ENCODE measurements at regions of chr3 and their contacts with region 1.

Region 1: GRCh38 chr3:63993653-63994079 is 29.6 kb downstream of the PSMD6 start:
- DNase-seq: peak in 5 of 6 donors; percentile 66 to 79 (median 69)
- ATAC-seq: peak; percentile 83 to 94 (median 92)
- H3K4me3 ChIP-seq: no peak overlapping the region
- H3K27ac ChIP-seq: peak overlapping the region in 1 of 4 donors; percentile 38
- H3K4me1 ChIP-seq: peaks cover 8 to 18% (median 17%) of the 10 kb centered on the region in 3 donors
- H3K27me3 ChIP-seq: no peaks in the 10 kb centered on the region
- CTCF ChIP-seq: peak; percentile 76 to 94 (median 85)

Region 2: GRCh38 chr3:63387568-63387967 is 606.1 kb before region 1 on chr3:
- intact Hi-C with region 1: no loop called
- DNase-seq: no peak
- ATAC-seq: no peak
- H3K4me3 ChIP-seq: no peak overlapping the region
- H3K27ac ChIP-seq: no peak overlapping the region
- H3K4me1 ChIP-seq: no peaks in the 10 kb centered on the region
- H3K27me3 ChIP-seq: no peaks in the 10 kb centered on the region
- CTCF ChIP-seq: no peak

Region 3: DNA sequence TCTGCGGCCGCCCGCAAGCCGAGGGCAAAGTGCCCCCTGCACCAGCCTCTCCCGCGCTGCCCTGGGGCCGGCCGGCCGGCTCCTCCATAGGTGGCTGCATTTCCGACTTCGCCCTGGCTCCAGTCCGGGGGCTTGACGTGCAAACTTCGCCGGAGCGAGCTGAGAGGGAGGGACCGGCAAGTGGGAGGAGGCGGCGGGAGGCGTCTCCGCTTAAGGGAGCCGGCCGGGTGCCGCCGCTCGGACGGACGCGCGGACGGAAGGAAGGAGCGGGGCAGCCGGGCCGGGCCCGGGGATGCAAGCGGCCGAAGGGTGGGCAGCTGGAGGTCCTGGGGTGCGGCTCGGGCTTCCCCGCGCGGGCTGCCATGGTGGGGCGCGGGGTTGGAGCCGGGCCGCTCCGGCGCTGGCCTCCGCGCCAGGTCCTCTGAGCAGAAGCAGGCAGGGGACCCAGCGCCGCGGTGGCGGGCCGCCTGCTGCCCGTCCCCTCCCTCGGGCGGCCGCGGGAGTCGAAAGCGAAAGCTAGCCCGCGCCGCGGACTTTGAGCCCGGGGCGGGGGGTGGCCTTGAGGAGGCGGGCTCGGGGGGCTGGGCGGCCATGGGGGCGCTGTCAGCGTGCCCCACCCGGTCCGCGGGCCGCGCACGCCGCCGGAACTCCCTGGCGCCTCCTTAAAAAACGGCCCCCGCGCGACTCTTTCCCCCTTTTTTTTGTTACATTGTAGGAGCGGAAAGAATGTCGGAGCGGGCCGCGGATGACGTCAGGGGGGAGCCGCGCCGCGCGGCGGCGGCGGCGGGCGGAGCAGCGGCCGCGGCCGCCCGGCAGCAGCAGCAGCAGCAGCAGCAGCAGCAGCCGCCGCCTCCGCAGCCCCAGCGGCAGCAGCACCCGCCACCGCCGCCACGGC is 81.5 kb before region 1 on chr3 and contains the start of gene SCAANT1:
- intact Hi-C with region 1: loop called in 1 of 3 experiments (anchors 5 kb)
- DNase-seq: peak; percentile 92 to 96 (median 93)
- ATAC-seq: peak; percentile 79 to 87 (median 82)
- H3K4me3 ChIP-seq: peak within 1 kb of the TSS; percentile 66 to 94 (median 78)
- H3K27ac ChIP-seq: peak within 1 kb of the TSS; percentile 92 to 97 (median 96)
- H3K4me1 ChIP-seq: peaks cover 8 to 34% (median 18%) of the 10 kb centered on the region in 3 donors
- H3K27me3 ChIP-seq: no peaks in the 10 kb centered on the region
- CTCF ChIP-seq: no peak
- total RNA-seq, gene SCAANT1: not detected

Region 4: DNA sequence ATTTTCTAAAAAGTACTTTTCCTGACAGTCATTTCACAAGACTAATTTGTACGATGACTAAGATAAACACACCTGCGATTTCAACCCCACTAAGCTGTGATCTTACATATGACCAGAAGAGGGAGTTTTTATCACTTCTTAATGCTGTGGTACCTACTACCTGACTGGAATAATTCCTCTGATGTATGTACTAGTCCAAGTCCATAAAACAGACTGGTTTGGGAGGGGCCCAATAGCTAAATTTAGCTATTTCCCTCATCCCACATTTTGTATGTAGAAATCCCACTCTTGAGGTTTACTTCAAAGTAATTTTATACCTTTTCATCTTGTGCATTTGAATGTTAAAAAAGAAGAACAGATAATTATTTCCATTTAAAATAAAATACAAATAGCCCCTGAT is 31.8 kb before region 1 on chr3:
- intact Hi-C with region 1: loop called in 1 of 3 experiments (anchors 5 kb)
- DNase-seq: no peak
- ATAC-seq: peak; percentile 71 to 83 (median 81)
- H3K4me3 ChIP-seq: no peak overlapping the region
- H3K27ac ChIP-seq: peak overlapping the region in 1 of 4 donors; percentile 73
- H3K4me1 ChIP-seq: peaks cover 50 to 82% (median 66%) of the 10 kb centered on the region in 3 donors
- H3K27me3 ChIP-seq: no peaks in the 10 kb centered on the region
- CTCF ChIP-seq: peak; percentile 37 to 68 (median 42)

Region 5: GRCh38 chr3:64049136-64049535 is 55.5 kb after region 1 on chr3:
- intact Hi-C with region 1: no loop called
- DNase-seq: no peak
- ATAC-seq: no peak
- H3K4me3 ChIP-seq: no peak overlapping the region
- H3K27ac ChIP-seq: no peak overlapping the region
- H3K4me1 ChIP-seq: no peaks in the 10 kb centered on the region
- H3K27me3 ChIP-seq: no peaks in the 10 kb centered on the region
- CTCF ChIP-seq: no peak

Region 6: DNA sequence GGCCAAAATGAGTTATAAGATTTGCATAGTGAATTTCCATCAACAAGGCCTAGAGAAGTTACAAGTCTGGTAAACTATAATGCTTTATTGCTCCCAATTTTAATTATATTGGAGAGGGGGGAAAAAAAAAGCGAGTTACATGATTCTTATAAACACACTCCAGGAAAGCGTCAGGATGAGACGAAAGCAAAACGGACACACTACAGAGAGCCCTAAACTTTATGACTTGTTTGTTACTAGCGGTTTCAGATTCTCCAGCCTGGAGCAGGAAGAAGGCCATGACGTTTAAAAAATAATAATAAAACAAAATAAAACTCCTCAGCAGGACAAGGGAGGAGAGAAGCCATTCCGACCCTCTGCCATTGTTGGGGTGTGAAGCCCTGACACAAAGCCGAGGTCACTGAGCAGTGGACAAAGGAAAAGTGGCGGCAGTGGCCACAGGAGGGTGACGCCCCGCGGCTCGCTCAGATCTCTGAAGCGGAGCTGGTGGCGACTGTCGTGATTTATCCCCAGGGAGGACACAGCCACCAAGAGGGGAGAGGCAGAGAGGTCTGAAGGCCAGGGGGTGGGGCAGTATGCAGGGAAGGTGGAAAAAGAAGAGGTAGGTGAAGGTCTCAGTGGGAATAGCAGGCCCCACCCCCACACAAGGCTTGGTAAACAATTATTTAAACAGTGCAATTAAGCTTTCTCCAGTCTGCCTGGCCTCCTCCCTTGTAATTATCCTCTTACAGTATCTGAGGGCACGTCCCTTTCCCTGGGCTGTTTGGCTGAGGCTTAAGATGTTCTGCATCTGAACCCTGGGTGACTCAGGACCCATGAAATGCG is 648.9 kb after region 1 on chr3:
- intact Hi-C with region 1: no loop called
- DNase-seq: no peak
- ATAC-seq: no peak
- H3K4me3 ChIP-seq: no peak overlapping the region
- H3K27ac ChIP-seq: no peak overlapping the region
- H3K4me1 ChIP-seq: peaks cover 0 to 4% (median 0%) of the 10 kb centered on the region in 3 donors
- H3K27me3 ChIP-seq: no peaks in the 10 kb centered on the region
- CTCF ChIP-seq: no peak

Measured in pancreas (tissue), 10 donors.